ENCODE measurements at regions of chr12 and their contacts with region 1.

Region 1: DNA sequence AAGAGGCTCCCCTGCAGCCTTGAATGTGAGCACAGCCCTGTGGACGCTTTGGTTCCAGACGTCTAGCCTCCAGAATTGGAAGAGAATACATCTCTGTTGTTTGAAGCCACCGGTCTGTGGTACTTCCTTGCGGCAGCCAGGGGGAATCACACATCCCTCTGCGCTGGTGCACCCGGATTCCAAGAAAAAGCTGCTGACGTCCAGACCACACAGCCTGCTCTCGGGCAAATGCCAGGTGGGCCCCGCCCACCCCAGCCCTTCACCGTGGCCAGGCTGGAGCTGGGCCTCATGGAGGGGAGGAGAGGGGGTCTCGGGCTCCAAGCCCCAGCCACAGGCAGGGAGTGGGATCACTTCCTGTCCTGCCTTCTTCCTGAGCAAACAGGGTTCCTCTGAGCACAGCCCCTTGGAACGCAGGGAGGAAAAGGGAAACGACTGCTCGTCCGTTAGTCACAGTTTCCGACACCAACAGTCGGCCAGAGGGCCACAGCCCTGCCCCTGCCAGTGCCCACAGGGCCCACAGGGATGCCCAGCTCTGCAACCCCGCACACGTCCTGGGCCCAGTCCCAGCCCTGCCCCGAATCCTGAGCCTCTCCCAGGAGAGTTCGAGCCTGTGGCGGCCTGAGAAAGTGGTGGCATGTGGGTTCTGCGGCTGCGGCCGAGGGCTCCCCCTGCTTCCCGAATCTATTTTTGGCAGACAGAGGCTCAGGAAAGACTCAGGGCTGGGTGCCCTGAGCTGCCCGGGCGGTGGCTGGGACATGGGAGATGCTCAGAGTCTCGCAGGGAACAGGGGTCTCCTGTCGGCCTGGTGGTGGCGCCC is 85.3 kb downstream of the RFLNA start:
- DNase-seq: peak; percentile 73 to 85
- ATAC-seq: peak; percentile 57 to 59
- H3K4me3 ChIP-seq: no peak overlapping the region
- H3K27ac ChIP-seq: peak overlapping the region; percentile 99 to 100
- H3K4me1 ChIP-seq: peaks cover 100% of the 10 kb centered on the region
- CTCF ChIP-seq: peak; percentile 11; the same call in 1 of the 3 replicates
- EP300 ChIP-seq: peak; percentile 43 to 78; a peak in 2 of 5 replicates
- POLR2A ChIP-seq: no peak
- RAD21 ChIP-seq: peak; percentile 9 to 34; a peak in 3 of 5 replicates

Region 2: DNA sequence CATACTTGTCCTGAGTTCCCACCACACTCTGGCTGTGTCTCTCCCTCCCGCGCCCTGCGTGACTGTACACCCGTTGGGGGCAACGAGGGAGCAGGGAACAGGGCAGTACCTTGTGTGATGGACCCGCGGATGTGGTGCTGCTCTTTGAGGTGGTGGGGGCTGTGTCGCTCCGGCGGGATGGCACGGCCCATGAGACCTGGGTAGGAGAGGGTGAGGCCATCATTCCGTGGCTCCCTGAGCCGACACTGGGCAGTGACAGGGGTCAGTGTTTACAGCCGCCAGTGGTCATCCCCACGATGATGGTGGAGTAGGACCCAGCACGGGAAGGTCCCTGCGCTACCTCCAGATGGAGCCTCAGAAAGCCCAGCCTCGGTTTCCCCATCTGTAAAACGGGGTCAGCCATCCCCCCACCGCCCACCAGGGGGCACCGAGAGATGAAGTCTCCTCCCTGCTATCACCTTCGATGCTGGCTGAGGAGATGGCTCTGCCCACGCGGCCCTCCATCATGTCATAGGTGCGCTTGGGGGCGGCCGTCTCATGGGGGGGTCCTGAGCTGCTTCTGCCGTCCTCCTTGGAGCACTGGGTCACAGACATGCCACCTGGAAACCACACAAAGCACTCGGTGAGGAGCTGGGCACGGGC is 32.3 kb before region 1 on chr12:
- CTCF ChIA-PET with region 1: interaction called, 18 read pairs
- POLR2A ChIA-PET with region 1: no interaction called
- DNase-seq: no peak
- ATAC-seq: peak in 1 of 2 experiments; percentile 18; a peak in 3 of 6 replicates
- H3K4me3 ChIP-seq: no peak overlapping the region
- H3K27ac ChIP-seq: peak overlapping the region in 1 of 2 experiments; percentile 56; a peak in 3 of 6 replicates
- H3K4me1 ChIP-seq: peaks cover 3% of the 10 kb centered on the region
- CTCF ChIP-seq: peak; percentile 43
- EP300 ChIP-seq: no peak
- POLR2A ChIP-seq: no peak
- RAD21 ChIP-seq: peak; percentile 46 to 50; a peak in 3 of 5 replicates

Region 3: DNA sequence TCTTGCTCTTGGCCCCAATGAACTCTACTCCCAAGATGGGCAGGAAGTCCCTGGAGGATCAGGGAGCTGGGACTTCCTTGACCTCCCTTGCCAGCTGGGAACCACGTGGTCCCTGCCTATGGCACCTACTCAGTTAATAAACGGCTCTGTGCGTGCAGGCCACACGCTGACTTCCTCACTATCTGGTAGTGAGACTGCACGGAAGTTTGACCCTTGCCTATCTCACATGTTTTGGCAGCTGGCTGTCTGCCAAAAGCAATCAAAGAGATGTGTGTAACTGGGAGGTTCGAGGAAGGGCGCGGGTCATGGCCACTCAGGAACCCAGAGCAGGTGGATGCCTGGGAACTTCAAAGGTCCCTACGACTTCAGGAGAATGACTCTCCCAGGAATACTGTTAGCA is 27.3 kb before region 1 on chr12:
- CTCF ChIA-PET with region 1: interaction called, 18 read pairs
- POLR2A ChIA-PET with region 1: no interaction called
- DNase-seq: peak in 1 of 2 experiments; percentile 62
- ATAC-seq: peak in 1 of 2 experiments; percentile 6; a peak in 2 of 6 replicates
- H3K4me3 ChIP-seq: no peak overlapping the region
- H3K27ac ChIP-seq: peak overlapping the region; percentile 27 to 50; a peak in 4 of 6 replicates
- H3K4me1 ChIP-seq: peaks cover 12% of the 10 kb centered on the region
- CTCF ChIP-seq: no peak
- EP300 ChIP-seq: no peak
- POLR2A ChIP-seq: no peak
- RAD21 ChIP-seq: no peak

Region 4: GRCh38 chr12:124369055-124369900 is 10.9 kb before region 1 on chr12:
- CTCF ChIA-PET with region 1: interaction called, 67 read pairs
- POLR2A ChIA-PET with region 1: interaction called, 4 read pairs
- DNase-seq: peak in 1 of 2 experiments; percentile 97
- ATAC-seq: peak; percentile 71 to 82
- H3K4me3 ChIP-seq: peak overlapping the region; percentile 6; the same call in 1 of the 3 replicates
- H3K27ac ChIP-seq: peak overlapping the region; percentile 92 to 98
- H3K4me1 ChIP-seq: peaks cover 81% of the 10 kb centered on the region
- CTCF ChIP-seq: no peak; the same call in 2 of the 3 replicates
- EP300 ChIP-seq: peak; percentile 92 to 96
- POLR2A ChIP-seq: no peak
- RAD21 ChIP-seq: peak in 1 of 2 experiments; percentile 45; a peak in 3 of 5 replicates